Heart right ventricle (tissue), 16 donors: ENCODE measurements at regions of chr1 and their contacts with region 1.

Region 1: DNA sequence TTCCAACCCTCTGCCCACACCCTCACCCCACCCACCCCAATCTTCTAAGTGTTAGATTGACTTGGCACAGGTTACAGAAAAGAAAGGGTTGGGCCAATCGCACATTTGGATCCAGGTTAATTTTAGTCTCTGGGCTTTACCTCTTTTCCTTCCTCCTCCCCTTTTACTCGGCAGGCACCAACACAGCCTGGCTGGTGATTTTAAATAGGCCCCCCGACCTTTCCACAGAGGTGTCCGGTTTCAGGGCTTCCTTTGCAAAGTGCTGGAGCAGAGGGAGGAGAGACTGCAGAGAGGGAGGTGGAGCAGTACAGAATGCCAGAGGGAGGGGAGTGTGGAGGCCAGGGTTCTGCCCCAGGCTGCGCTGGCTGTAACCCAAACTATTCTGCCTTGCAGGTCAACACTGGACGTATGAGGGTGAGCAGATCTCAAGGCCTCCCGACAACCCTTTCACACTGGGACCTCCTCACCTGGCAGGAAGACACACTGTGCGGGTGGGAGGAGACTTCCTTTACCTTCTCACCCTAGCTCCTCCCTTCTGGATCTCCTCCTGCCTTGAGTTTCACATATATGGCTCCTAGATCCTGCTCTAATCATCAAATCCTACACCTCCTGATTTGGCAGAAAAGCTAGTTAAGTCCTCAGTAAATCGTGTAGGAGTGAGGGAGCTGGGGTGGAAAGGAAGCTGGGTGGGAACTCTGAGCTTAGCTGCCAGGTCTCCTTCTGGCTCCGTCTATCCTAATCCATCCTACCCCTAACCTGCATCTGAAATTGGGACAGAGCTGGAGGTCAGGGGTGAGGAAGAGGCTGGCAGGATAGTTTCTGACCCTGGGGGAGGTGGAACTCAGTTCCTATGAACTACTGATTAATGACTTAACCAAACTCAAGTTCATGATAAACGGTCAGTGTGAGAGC is 2.4 kb downstream of the CA14 start:
- DNase-seq: no peak
- ATAC-seq: peak in 7 of 8 donors; percentile 8 to 75 (median 37)
- H3K4me3 ChIP-seq: peak overlapping the region in 1 of 10 donors; percentile 10
- H3K27ac ChIP-seq: peak overlapping the region in 5 of 10 donors; percentile 15 to 59 (median 37)
- H3K4me1 ChIP-seq: peaks cover 5 to 48% (median 22%) of the 10 kb centered on the region in 9 donors
- H3K27me3 ChIP-seq: peaks cover 0 to 32% (median 0%) of the 10 kb centered on the region in 7 donors
- CTCF ChIP-seq: no peak

Region 2: GRCh38 chr1:150281837-150282653 is 22.0 kb after region 1 on chr1 and contains the start of gene CIART:
- intact Hi-C with region 1: loop called in 7 of 10 experiments (anchors 1 to 2 kb)
- DNase-seq: peak; percentile 85 to 96
- ATAC-seq: peak; percentile 94 to 97 (median 96)
- H3K4me3 ChIP-seq: peak within 1 kb of the TSS; percentile 35 to 76 (median 59)
- H3K27ac ChIP-seq: peak within 1 kb of the TSS; percentile 83 to 93 (median 91)
- H3K4me1 ChIP-seq: peaks cover 0 to 32% (median 24%) of the 10 kb centered on the region in 9 donors
- H3K27me3 ChIP-seq: peaks cover 0 to 11% (median 0%) of the 10 kb centered on the region in 7 donors
- CTCF ChIP-seq: no peak
- total RNA-seq, gene CIART: 3.4 to 22.6 (median 15.5) TPM

Region 3: DNA sequence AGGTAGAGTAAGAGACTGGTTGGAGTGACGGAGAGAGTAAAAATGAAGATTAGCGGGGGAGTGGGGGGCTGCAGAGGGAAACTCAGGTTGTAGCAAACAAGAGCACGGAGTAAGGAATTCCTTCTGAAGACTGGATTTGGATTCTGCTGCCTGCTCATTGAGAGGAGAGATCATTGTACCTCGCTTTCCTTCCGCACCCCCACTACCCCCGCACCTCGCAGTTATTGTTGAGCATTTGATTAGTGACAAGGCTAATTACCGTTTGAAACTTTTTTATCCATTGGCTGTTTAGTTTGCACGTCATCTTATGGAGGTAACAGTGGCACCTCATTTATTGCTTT is 61.8 kb after region 1 on chr1:
- intact Hi-C with region 1: loop called in 2 of 10 experiments (anchors 5 kb)
- DNase-seq: no peak
- ATAC-seq: peak in 3 of 8 donors; percentile 3 to 16 (median 10)
- H3K4me3 ChIP-seq: peak overlapping the region; percentile 60 to 84 (median 75)
- H3K27ac ChIP-seq: peak overlapping the region; percentile 65 to 95 (median 90)
- H3K4me1 ChIP-seq: peaks cover 0 to 25% (median 13%) of the 10 kb centered on the region in 9 donors
- H3K27me3 ChIP-seq: no peaks in the 10 kb centered on the region
- CTCF ChIP-seq: no peak

Region 4: GRCh38 chr1:150429805-150430204 is 169.8 kb after region 1 on chr1:
- intact Hi-C with region 1: loop called in 2 of 10 experiments (anchors 10 kb)
- DNase-seq: no peak
- ATAC-seq: no peak
- H3K4me3 ChIP-seq: no peak overlapping the region
- H3K27ac ChIP-seq: no peak overlapping the region
- H3K4me1 ChIP-seq: no peaks in the 10 kb centered on the region
- H3K27me3 ChIP-seq: no peaks in the 10 kb centered on the region
- CTCF ChIP-seq: peak in 6 of 9 donors; percentile 15 to 35 (median 20)

Region 5: DNA sequence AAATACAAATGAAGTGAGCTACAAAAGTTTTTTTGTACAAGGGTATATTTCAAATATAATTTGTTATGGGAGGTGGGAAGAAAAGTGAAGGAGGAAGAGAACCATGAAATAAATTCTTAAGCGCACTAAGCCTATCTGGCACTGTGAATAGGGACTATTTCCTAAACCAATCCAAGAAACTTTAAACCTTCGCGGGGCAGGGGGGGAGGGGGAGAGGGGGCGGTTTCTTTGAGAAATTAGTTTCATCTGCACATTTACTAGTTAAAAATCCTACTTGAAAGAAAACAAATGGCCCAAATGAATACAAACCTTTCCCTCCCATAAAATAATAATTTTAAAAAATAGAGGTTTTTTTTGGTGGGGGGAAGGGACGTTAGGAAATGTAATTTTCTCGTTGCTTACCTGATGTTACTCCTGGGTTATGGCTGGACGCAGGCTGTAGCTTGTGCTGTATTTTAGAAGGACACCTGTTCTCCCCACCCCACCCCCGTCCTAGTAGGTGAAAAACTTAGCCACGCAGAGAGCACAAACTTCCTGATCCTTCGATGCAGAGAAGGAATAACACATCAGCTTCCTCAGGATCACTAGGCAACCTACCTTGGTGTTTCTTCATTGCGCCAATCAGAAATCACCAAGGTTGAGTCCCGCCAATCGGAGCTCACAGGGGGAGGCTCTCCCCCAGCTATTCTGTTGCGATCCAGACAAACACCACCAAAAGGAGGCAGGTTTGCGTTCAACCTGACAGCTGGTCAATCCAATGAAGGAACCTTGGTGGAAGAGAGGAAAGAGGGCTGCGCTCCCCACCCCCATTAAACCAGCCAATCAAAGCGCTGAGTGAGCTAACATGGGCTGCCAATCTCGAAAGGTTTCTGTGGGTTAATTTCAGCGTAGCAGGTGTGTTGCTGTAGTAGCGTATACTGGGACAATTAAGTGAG is 436.8 kb after region 1 on chr1 and contains the start of gene GOLPH3L:
- intact Hi-C with region 1: loop called in 1 of 10 experiments (anchors 10 kb)
- DNase-seq: peak; percentile 80 to 97
- ATAC-seq: peak; percentile 100
- H3K4me3 ChIP-seq: peak within 1 kb of the TSS; percentile 48 to 79 (median 72)
- H3K27ac ChIP-seq: peak within 1 kb of the TSS in 9 of 10 donors; percentile 26 to 76 (median 68)
- H3K4me1 ChIP-seq: peaks cover 0 to 26% (median 17%) of the 10 kb centered on the region in 9 donors
- H3K27me3 ChIP-seq: no peaks in the 10 kb centered on the region
- CTCF ChIP-seq: peak in 5 of 9 donors; percentile 11 to 55 (median 22)
- total RNA-seq, gene GOLPH3L: 10.9 to 17.8 (median 15.4) TPM